ENCODE measurements at regions of chr7 and their contacts with region 1.

Region 1: DNA sequence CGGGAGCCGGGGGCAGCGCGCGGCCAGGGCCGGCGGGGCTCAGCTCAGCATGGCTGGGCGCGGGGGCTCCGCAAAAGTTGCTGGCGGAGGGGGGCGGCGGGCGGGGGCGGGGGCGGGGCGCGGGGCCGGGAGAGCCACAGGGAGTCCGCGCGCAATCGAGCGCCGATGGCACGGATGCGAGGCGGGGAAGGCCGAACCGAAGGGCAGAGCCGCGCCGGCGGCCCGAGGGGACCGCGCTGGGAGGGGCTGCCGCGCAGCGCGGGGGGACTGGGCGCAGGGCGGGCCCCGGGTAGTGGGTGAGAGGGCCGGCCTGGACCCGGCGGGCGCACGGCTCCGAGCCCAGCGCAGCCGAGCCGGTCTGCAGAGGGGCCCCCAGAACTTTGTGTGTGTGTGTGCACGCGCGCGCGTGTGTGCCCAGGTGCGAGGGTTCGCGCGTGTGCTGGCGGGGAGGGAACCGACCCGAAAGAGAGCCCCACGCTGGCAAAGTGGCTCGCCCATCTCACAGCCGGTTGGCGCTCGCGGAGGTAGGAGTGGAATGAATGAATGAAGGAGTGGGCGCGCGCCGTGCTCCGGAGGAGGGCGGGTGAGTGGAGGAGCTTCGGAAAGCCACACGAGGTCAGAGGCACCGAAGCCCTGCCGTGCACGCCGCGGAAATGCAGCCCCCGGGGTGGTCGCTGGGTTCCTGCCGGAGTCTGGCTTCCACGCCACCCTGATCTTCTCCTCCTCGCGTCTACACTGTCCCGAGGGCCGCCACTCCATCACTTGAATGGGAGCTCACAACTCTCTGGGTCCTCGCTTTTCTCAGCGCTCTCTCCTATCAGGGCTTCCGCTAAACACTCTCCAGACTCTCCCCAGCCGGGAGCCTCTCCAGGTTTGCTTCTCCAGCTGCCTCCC is at the start of gene HIPK2:
- DNase-seq: peak; percentile 58 to 79 (median 67)
- H3K4me3 ChIP-seq: peak within 1 kb of the TSS; percentile 72
- H3K4me3 Mint-ChIP-seq: peak within 1 kb of the TSS; percentile 96 to 100 (median 98)
- H3K27ac ChIP-seq: peak within 1 kb of the TSS; percentile 81
- H3K27ac Mint-ChIP-seq: peak within 1 kb of the TSS; percentile 91 to 99 (median 96)
- H3K4me1 ChIP-seq: peaks cover 39% of the 10 kb centered on the region
- H3K4me1 Mint-ChIP-seq: peaks cover 38 to 49% (median 43%) of the 10 kb centered on the region in 3 donors
- H3K27me3 ChIP-seq: no peaks in the 10 kb centered on the region
- H3K27me3 Mint-ChIP-seq: peaks cover 9 to 15% of the 10 kb centered on the region in 2 donors
- total RNA-seq, gene HIPK2: 21.2 to 22.7 TPM

Region 2: GRCh38 chr7:139767561-139767982 is 10.6 kb before region 1 on chr7:
- CTCF ChIA-PET with region 1: interaction called, 7 read pairs
- POLR2A ChIA-PET with region 1: interaction called, 16 read pairs
- DNase-seq: peak in 2 of 5 donors; percentile 36 to 54
- H3K4me3 ChIP-seq: peak overlapping the region; percentile 16
- H3K4me3 Mint-ChIP-seq: peak overlapping the region; percentile 3 to 69 (median 40)
- H3K27ac ChIP-seq: no peak overlapping the region
- H3K27ac Mint-ChIP-seq: peak overlapping the region; percentile 44 to 99 (median 85)
- H3K4me1 ChIP-seq: peaks cover 40% of the 10 kb centered on the region
- H3K4me1 Mint-ChIP-seq: peaks cover 53 to 83% (median 60%) of the 10 kb centered on the region in 3 donors
- H3K27me3 ChIP-seq: no peaks in the 10 kb centered on the region
- H3K27me3 Mint-ChIP-seq: no peaks in the 10 kb centered on the region

Region 3: DNA sequence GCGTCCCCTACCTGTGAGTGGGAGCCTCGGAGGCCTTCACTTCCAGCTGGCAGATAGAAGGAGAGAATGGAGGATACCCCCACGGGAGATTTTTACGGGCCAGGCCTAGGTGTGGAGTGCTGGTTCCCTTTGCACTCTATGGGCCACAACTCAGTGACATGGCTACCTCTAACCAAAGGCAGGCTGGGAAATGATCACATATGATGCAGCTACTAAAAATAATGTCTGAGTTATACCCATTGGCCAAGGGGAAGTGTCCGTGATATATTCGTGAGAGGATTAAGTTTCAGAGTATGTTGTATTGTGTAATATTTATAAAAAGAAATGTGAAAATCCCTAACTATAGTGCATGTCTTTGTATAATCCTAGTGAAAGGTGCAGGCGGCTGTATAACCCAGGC is 13.1 kb after region 1 on chr7:
- CTCF ChIA-PET with region 1: no interaction called
- POLR2A ChIA-PET with region 1: interaction called, 13 read pairs
- DNase-seq: no peak
- H3K4me3 ChIP-seq: no peak overlapping the region
- H3K4me3 Mint-ChIP-seq: no peak overlapping the region
- H3K27ac ChIP-seq: no peak overlapping the region
- H3K27ac Mint-ChIP-seq: no peak overlapping the region
- H3K4me1 ChIP-seq: no peaks in the 10 kb centered on the region
- H3K4me1 Mint-ChIP-seq: no peaks in the 10 kb centered on the region
- H3K27me3 ChIP-seq: no peaks in the 10 kb centered on the region
- H3K27me3 Mint-ChIP-seq: peaks cover 0 to 20% of the 10 kb centered on the region in 2 donors

Measured in CD8-positive, alpha-beta memory T cell (primary cell).